Heart left ventricle (tissue), 16 donors: ENCODE measurements at regions of chr19 and their contacts with region 1.

Region 1: GRCh38 chr19:18251587-18252369 is 22.5 kb downstream of the IQCN start:
- DNase-seq: peak in 4 of 5 donors; percentile 46 to 72 (median 62)
- ATAC-seq: peak; percentile 55 to 84 (median 75)
- H3K4me3 ChIP-seq: no peak overlapping the region
- H3K27ac ChIP-seq: no peak overlapping the region
- H3K4me1 ChIP-seq: peaks cover 0 to 10% (median 0%) of the 10 kb centered on the region in 12 donors
- H3K27me3 ChIP-seq: peaks cover 0 to 12% (median 4%) of the 10 kb centered on the region in 9 donors
- CTCF ChIP-seq: peak; percentile 84 to 95 (median 92)
- POLR2A ChIP-seq: no peak

Region 2: DNA sequence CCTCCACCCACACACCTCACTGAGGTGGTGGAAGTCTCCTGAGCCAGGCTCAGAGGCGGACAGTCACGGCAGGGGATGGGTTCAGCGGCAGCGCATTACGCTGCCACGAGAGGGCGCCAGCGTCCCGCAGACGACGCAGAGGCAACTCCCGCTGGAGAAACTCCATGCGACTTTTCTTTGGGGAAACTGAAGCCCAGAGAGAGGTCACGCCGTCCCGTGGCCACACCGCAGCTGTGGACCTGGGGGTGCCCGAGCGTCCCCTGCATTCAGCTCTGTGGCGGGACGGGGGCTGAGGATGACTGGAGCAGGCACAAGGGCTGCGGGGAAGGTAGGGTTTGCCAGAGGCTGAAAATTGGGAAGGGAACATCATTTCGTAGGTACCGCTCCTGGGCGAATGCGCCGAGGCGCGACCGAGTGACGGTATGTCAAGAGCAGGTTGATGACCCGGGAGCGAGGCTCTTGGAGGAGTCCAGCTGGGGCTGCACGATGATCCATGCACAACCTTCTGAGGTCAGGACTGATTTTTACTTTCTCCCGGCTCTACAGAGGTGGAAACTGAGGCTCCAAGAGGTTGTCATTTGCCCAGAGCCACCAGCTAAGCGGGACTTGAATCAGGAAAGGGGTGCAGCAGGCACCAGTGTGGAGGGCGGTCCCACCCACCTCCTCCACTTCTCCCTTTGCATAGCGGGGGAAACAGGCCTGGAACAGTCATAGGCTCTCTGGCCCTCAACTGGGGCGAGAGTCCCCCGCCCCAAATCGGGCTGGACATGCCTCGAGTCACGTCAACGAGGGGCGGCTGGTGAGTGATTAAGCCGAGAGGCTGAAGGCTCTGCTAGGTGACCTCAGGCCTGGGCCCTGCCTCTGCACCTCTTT is 244.5 kb before region 1 on chr19:
- intact Hi-C with region 1: loop called in 1 of 10 experiments (anchors 5 kb)
- DNase-seq: peak; percentile 80 to 93 (median 84)
- ATAC-seq: peak; percentile 73 to 93 (median 86)
- H3K4me3 ChIP-seq: peak overlapping the region; percentile 47 to 84 (median 61)
- H3K27ac ChIP-seq: peak overlapping the region; percentile 79 to 93 (median 86)
- H3K4me1 ChIP-seq: peaks cover 0 to 47% (median 20%) of the 10 kb centered on the region in 12 donors
- H3K27me3 ChIP-seq: peaks cover 0 to 1% (median 0%) of the 10 kb centered on the region in 9 donors
- CTCF ChIP-seq: peak; percentile 95 to 99 (median 99)
- POLR2A ChIP-seq: peak in 1 of 2 donors; percentile 53

Region 3: GRCh38 chr19:18192673-18193387 is 58.9 kb before region 1 on chr19 and contains the start of gene MPV17L2:
- intact Hi-C with region 1: loop called in 1 of 10 experiments (anchors 5 kb)
- DNase-seq: peak; percentile 100
- ATAC-seq: peak; percentile 94 to 99 (median 96)
- H3K4me3 ChIP-seq: peak within 1 kb of the TSS; percentile 40 to 99 (median 84)
- H3K27ac ChIP-seq: peak within 1 kb of the TSS; percentile 78 to 99 (median 94)
- H3K4me1 ChIP-seq: peaks cover 0 to 25% (median 14%) of the 10 kb centered on the region in 12 donors
- H3K27me3 ChIP-seq: no peaks in the 10 kb centered on the region
- CTCF ChIP-seq: no peak
- POLR2A ChIP-seq: peak; percentile 82 to 89
- total RNA-seq, gene MPV17L2: 10.6 to 37.4 (median 14.8) TPM

Region 4: DNA sequence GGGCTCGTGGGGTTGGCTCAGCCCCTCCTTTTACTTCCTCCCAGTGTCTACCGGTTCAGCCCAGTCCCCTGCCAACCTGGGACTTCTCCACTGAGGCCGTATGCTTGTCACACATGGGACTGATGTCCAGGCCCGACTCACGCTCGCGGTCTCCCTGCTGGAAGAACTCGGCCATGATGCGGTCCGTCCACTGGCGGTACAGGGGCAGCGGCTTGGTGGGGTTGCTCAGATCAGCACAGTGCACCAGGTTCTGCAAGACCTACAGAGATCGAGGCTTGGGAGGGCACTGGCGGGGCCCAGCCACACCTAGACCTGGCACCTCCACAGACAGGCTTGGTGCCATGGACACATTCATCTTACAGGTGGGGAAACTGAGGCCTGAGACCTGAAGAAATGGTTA is 40.1 kb before region 1 on chr19:
- intact Hi-C with region 1: loop called (anchors 1 to 5 kb)
- DNase-seq: no peak
- ATAC-seq: no peak
- H3K4me3 ChIP-seq: no peak overlapping the region
- H3K27ac ChIP-seq: no peak overlapping the region
- H3K4me1 ChIP-seq: peaks cover 0 to 5% (median 0%) of the 10 kb centered on the region in 12 donors
- H3K27me3 ChIP-seq: peaks cover 0 to 7% (median 0%) of the 10 kb centered on the region in 9 donors
- CTCF ChIP-seq: no peak
- POLR2A ChIP-seq: no peak

Region 5: GRCh38 chr19:18401580-18402112 is 149.9 kb after region 1 on chr19:
- intact Hi-C with region 1: loop called in 1 of 10 experiments (anchors 10 kb)
- DNase-seq: peak in 3 of 5 donors; percentile 65 to 84 (median 72)
- ATAC-seq: peak; percentile 81 to 90 (median 82)
- H3K4me3 ChIP-seq: no peak overlapping the region
- H3K27ac ChIP-seq: peak overlapping the region in 1 of 12 donors; percentile 74
- H3K4me1 ChIP-seq: peaks cover 0 to 53% (median 0%) of the 10 kb centered on the region in 12 donors
- H3K27me3 ChIP-seq: peaks cover 0 to 18% (median 0%) of the 10 kb centered on the region in 9 donors
- CTCF ChIP-seq: peak in 9 of 12 donors; percentile 11 to 41 (median 23)
- POLR2A ChIP-seq: no peak